KBM-7 (cell line): ENCODE measurements at regions of chr15 and their contacts with region 1.

Region 1: GRCh38 chr15:92714477-92715401 is 59.2 kb upstream of the FAM174B start:
- DNase-seq: peak; percentile 88

Region 2: DNA sequence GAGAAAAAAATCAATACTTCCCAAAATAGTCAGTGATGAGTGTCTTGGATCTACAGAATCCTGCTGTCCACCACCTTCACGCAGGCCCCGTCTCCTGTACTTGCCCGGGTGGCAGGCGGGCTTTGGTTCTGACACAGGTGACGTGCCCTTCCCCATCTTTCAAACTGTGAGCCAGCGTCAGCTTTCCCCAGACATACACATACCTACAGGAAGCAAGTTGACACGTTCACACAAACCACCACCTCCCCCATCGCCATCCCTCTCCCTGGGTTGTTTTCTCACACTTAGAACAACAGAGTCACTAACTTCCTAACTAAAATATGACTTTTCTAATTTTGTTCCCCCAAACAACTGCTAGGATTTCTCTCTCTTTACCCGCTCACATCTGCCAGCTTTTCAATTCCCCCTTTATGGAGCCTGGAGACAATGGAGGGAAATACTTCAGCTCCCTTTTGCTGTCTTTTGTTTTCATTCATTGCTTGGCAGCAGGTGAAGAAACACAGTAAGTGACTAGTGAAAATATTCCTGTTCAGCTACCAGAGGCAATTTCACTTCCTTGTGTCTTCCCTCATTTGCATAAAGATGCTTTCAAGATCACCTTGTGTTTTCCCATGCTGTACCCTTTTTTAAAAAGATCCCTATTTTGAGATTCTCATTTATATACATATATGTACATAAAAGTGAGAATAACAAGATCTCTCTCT is 612.9 kb before region 1 on chr15:
- in situ Hi-C with region 1: loop called (anchors 25 kb)
- DNase-seq: no peak

Region 3: GRCh38 chr15:92527197-92527596 is 187.5 kb before region 1 on chr15:
- in situ Hi-C with region 1: no loop called
- DNase-seq: no peak

Region 4: GRCh38 chr15:92780843-92781242 is 66.1 kb after region 1 on chr15:
- in situ Hi-C with region 1: no loop called
- DNase-seq: no peak